OCI-LY7 (cell line): ENCODE measurements at regions of chr7 and their contacts with region 1.

Region 1: GRCh38 chr7:24665564-24666294 is 91.5 kb downstream of the GSDME start:
- DNase-seq: peak; percentile 63
- H3K4me3 ChIP-seq: no peak overlapping the region
- H3K27ac ChIP-seq: no peak overlapping the region
- H3K4me1 ChIP-seq: no peaks in the 10 kb centered on the region
- CTCF ChIP-seq: peak; percentile 97

Region 2: DNA sequence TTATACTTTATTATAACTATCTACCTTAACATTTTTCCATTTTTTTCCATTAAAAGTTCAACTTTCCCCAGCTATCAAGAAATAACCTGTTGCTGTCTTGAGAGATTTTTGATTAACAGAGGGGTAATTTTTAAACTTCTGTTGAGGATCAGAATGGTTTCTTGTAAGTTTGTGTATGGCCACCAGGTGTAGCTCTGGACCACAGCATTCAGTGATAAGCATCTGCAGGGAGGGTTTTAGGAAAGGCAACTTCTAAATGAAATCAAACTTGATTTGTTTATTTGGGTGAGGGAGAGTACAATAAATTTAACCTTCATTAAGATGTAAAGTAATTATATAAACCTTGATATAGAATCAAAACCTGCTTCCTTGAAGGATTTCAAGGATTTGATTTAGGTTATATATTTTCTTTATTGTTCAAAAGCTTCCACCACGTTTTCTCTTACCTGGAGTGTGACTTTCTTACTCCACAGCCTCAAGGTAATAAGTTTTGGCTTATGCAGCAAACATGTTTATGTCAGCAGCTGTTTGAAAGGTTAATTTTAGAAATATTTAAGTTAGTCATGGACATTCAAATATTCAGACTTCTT is 802.4 kb before region 1 on chr7:
- CTCF ChIA-PET with region 1: no interaction called
- POLR2A ChIA-PET with region 1: no interaction called
- intact Hi-C with region 1: loop called (anchors 10 kb)
- DNase-seq: peak; percentile 17
- H3K4me3 ChIP-seq: no peak overlapping the region
- H3K27ac ChIP-seq: no peak overlapping the region
- H3K4me1 ChIP-seq: no peaks in the 10 kb centered on the region
- CTCF ChIP-seq: peak; percentile 76

Region 3: GRCh38 chr7:24290004-24290641 is 375.6 kb before region 1 on chr7:
- CTCF ChIA-PET with region 1: no interaction called
- POLR2A ChIA-PET with region 1: no interaction called
- intact Hi-C with region 1: loop called (anchors 1 kb)
- DNase-seq: peak; percentile 90
- H3K4me3 ChIP-seq: no peak overlapping the region
- H3K27ac ChIP-seq: no peak overlapping the region
- H3K4me1 ChIP-seq: peaks cover 11% of the 10 kb centered on the region
- CTCF ChIP-seq: peak; percentile 91

Region 4: GRCh38 chr7:24381894-24382505 is 283.7 kb before region 1 on chr7:
- CTCF ChIA-PET with region 1: no interaction called
- POLR2A ChIA-PET with region 1: no interaction called
- intact Hi-C with region 1: loop called (anchors 5 kb)
- DNase-seq: peak; percentile 79
- H3K4me3 ChIP-seq: no peak overlapping the region
- H3K27ac ChIP-seq: no peak overlapping the region
- H3K4me1 ChIP-seq: peaks cover 12% of the 10 kb centered on the region
- CTCF ChIP-seq: peak; percentile 93

Region 5: GRCh38 chr7:24401628-24402593 is 263.8 kb before region 1 on chr7:
- CTCF ChIA-PET with region 1: no interaction called
- POLR2A ChIA-PET with region 1: no interaction called
- intact Hi-C with region 1: loop called (anchors 5 kb)
- DNase-seq: peak; percentile 49
- H3K4me3 ChIP-seq: no peak overlapping the region
- H3K27ac ChIP-seq: no peak overlapping the region
- H3K4me1 ChIP-seq: no peaks in the 10 kb centered on the region
- CTCF ChIP-seq: peak; percentile 76

Region 6: GRCh38 chr7:24501009-24501408 is 164.7 kb before region 1 on chr7:
- CTCF ChIA-PET with region 1: no interaction called
- POLR2A ChIA-PET with region 1: no interaction called
- intact Hi-C with region 1: no loop called
- DNase-seq: no peak
- H3K4me3 ChIP-seq: no peak overlapping the region
- H3K27ac ChIP-seq: no peak overlapping the region
- H3K4me1 ChIP-seq: no peaks in the 10 kb centered on the region
- CTCF ChIP-seq: no peak

Region 7: DNA sequence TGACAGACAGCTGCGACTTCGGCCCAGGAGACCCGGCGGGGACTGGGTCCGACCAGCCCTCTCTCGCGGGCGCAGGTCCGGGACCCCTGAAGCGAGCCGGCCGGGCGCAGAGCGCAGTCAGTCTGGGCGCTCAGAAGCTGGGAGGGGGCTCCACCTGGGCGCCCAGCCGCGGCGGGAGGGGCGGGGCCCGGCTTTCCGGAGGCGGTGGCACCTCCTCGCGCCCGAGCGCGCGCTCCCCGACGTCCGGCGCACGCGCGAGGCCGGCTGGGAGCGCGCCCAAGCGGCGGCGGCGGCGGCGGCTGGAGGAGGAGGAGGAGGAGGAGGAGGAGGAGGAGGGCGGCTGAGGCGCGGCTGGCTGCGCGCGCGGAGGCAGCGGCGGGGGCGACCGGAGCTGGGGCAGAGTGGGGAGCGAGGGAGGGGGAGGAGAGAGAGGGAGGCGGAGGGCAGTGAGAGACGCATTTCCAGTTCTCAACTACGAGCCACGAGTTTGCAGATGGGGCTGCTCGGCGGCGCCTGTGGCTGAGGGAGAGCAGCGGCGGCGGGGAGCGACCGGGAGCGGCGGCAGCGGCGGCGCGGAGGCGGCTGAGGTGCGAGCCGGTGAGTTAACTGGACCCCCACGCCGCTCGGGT is 92.6 kb before region 1 on chr7 and contains the start of gene PALS2:
- CTCF ChIA-PET with region 1: no interaction called
- POLR2A ChIA-PET with region 1: interaction called, 4 read pairs
- intact Hi-C with region 1: loop called (anchors 1 kb)
- DNase-seq: peak; percentile 88
- H3K4me3 ChIP-seq: peak within 1 kb of the TSS; percentile 96
- H3K27ac ChIP-seq: peak within 1 kb of the TSS; percentile 64
- H3K4me1 ChIP-seq: peaks cover 36% of the 10 kb centered on the region
- CTCF ChIP-seq: no peak
- total RNA-seq, gene PALS2: 26.3 and 45.1 TPM in 2 replicates